ENCODE measurements at regions of chr17 and their contacts with region 1.

Region 1: GRCh38 chr17:73521376-73521775 is 122.9 kb downstream of the SDK2 start:
- DNase-seq: no peak
- H3K4me3 ChIP-seq: no peak overlapping the region
- H3K27ac ChIP-seq: no peak overlapping the region
- H3K4me1 ChIP-seq: no peaks in the 10 kb centered on the region
- H3K27me3 ChIP-seq: no peaks in the 10 kb centered on the region
- CTCF ChIP-seq: no peak

Region 2: DNA sequence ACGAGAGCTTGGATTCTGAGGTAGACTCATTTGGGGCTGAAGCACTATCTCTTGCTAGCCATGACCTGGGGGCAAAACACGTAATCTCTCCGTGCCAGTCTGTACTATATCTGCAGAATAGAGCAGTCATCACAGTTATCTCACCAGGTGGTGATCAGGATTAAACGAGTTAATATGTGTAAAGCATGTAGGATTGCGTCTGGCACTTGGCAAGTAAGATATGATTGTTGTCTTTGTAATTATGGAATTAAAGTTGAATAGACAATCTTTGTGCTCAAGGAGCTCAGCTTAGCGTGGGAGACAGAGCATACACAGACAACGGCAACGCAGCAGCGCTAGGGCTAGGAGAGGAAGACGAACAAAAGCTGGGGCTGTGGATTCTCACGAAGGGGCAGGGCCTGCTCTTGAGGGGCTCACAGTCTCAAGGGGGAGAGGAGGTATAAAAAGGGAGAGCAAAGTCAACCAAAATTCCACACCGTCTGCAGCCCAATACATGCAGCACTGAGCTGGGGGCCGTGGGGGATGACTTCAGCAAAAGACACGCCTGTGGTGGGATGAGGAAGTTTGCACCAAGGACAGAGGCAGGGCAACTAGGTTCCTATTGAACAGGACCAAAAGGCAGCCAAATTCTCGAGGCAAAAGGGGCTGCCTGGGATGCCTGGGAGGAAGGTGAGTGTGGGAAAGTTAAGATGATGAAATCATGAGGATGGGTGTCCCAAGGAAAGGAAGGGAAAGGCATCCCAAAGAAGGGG is 54.3 kb after region 1 on chr17:
- CTCF ChIA-PET with region 1: no interaction called
- dilution Hi-C with region 1: loop called (anchors 5 kb)
- in situ Hi-C with region 1: no loop called
- intact Hi-C with region 1: no loop called
- DNase-seq: no peak
- H3K4me3 ChIP-seq: no peak overlapping the region
- H3K27ac ChIP-seq: no peak overlapping the region
- H3K4me1 ChIP-seq: no peaks in the 10 kb centered on the region
- H3K27me3 ChIP-seq: no peaks in the 10 kb centered on the region
- CTCF ChIP-seq: no peak

Measured in mammary epithelial cell (primary cell).